Left ventricle myocardium inferior (tissue), 1 donor: ENCODE measurements at regions of chr12 and their contacts with region 1.

Region 1: GRCh38 chr12:102484428-102484958 is 4.1 kb upstream of the IGF1 start:
- DNase-seq: peak; percentile 38
- H3K4me3 ChIP-seq: peak overlapping the region; percentile 43
- H3K27ac ChIP-seq: peak overlapping the region; percentile 47
- H3K4me1 ChIP-seq: peaks cover 21% of the 10 kb centered on the region
- H3K27me3 ChIP-seq: no peaks in the 10 kb centered on the region
- CTCF ChIP-seq: peak; percentile 97

Region 2: GRCh38 chr12:102169922-102170621 is 314.4 kb before region 1 on chr12:
- intact Hi-C with region 1: loop called (anchors 10 kb)
- DNase-seq: no peak
- H3K4me3 ChIP-seq: no peak overlapping the region
- H3K27ac ChIP-seq: no peak overlapping the region
- H3K4me1 ChIP-seq: peaks cover 7% of the 10 kb centered on the region
- H3K27me3 ChIP-seq: no peaks in the 10 kb centered on the region
- CTCF ChIP-seq: peak; percentile 84